PC-3 (cell line): ENCODE measurements at regions of chr11 and their contacts with region 1.

Region 1: GRCh38 chr11:14454861-14455632 is 44.6 kb downstream of the COPB1 start:
- DNase-seq: peak; percentile 55
- ATAC-seq: peak; percentile 53
- H3K4me3 ChIP-seq: no peak overlapping the region
- H3K27ac ChIP-seq: no peak overlapping the region
- H3K4me1 ChIP-seq: peaks cover 9% of the 10 kb centered on the region; the same call in 1 of the 2 replicates
- H3K27me3 ChIP-seq: no peaks in the 10 kb centered on the region
- CTCF ChIP-seq: peak; percentile 81

Region 2: GRCh38 chr11:13955971-13956421 is 499.1 kb before region 1 on chr11:
- CTCF ChIA-PET with region 1: interaction called, 10 read pairs
- POLR2A ChIA-PET with region 1: no interaction called
- intact Hi-C with region 1: no loop called
- DNase-seq: peak; percentile 76
- ATAC-seq: peak; percentile 53; the same call in 1 of the 2 replicates
- H3K4me3 ChIP-seq: no peak overlapping the region
- H3K27ac ChIP-seq: no peak overlapping the region
- H3K4me1 ChIP-seq: peaks cover 5% of the 10 kb centered on the region; the same call in 1 of the 2 replicates
- H3K27me3 ChIP-seq: peaks cover 7% of the 10 kb centered on the region; the same call in 1 of the 2 replicates
- CTCF ChIP-seq: peak; percentile 89

Region 3: GRCh38 chr11:14300661-14301304 is 154.3 kb before region 1 on chr11:
- CTCF ChIA-PET with region 1: interaction called, 35 read pairs
- POLR2A ChIA-PET with region 1: no interaction called
- intact Hi-C with region 1: loop called (anchors 1 kb)
- DNase-seq: peak; percentile 80
- ATAC-seq: peak; percentile 98
- H3K4me3 ChIP-seq: no peak overlapping the region
- H3K27ac ChIP-seq: no peak overlapping the region
- H3K4me1 ChIP-seq: no peaks in the 10 kb centered on the region
- H3K27me3 ChIP-seq: no peaks in the 10 kb centered on the region
- CTCF ChIP-seq: peak; percentile 89

Region 4: GRCh38 chr11:14308114-14308896 is 146.7 kb before region 1 on chr11:
- CTCF ChIA-PET with region 1: interaction called, 10 read pairs
- POLR2A ChIA-PET with region 1: no interaction called
- intact Hi-C with region 1: no loop called
- DNase-seq: peak; percentile 62
- ATAC-seq: peak; percentile 49
- H3K4me3 ChIP-seq: peak overlapping the region; percentile 22; the same call in 1 of the 2 replicates
- H3K27ac ChIP-seq: peak overlapping the region; percentile 14
- H3K4me1 ChIP-seq: peaks cover 36% of the 10 kb centered on the region
- H3K27me3 ChIP-seq: no peaks in the 10 kb centered on the region
- CTCF ChIP-seq: peak; percentile 69

Region 5: DNA sequence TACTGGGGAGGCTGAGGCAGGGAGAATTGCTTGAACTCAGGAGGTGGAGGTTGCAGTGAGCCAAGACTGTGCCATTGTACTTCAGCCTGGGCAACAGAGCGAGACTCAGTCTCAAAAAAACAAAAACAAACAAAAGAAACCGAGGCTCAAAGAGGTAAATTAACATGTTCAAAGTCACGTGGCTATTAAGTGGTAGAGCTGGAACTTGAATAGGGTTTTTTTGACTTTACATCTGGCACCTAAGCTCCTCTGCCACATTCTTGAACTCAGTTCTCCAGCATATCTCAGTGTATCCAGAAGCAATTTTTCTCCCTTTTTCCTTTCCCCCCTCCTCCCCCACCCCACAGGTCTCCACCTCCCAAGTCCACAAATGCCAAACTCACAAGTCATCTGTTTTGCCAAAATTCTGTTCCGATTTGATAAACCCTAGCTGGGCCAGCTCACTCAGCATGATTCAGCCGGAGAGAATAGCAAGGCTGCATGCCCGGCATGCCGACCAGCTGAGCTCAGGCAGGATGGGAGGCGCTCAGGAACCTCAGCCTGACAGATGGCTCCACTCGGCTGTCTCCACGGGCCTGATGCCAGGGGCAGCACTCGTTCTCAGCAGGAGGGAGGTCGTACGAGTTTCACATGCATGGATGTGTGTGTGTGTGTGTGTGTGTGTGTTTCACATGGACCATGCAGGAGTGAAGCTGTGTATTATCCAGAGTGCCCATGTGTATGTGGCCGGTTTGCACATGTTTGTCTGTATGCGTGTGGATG is 32.8 kb before region 1 on chr11:
- CTCF ChIA-PET with region 1: interaction called, 20 read pairs
- POLR2A ChIA-PET with region 1: interaction called, 21 read pairs
- intact Hi-C with region 1: loop called (anchors 5 kb)
- DNase-seq: peak; percentile 97
- ATAC-seq: peak; percentile 98
- H3K4me3 ChIP-seq: peak overlapping the region; percentile 14; the same call in 1 of the 2 replicates
- H3K27ac ChIP-seq: no peak overlapping the region
- H3K4me1 ChIP-seq: peaks cover 38% of the 10 kb centered on the region
- H3K27me3 ChIP-seq: no peaks in the 10 kb centered on the region
- CTCF ChIP-seq: no peak